ENCODE measurements at regions of chr1 and their contacts with region 1.

Region 1: GRCh38 chr1:245599371-245600174 is 444.8 kb downstream of the KIF26B start:
- DNase-seq: no peak
- ATAC-seq: no peak
- H3K4me3 ChIP-seq: no peak overlapping the region
- H3K27ac ChIP-seq: no peak overlapping the region
- H3K4me1 ChIP-seq: no peaks in the 10 kb centered on the region
- H3K27me3 ChIP-seq: no peaks in the 10 kb centered on the region; the same call in 1 of the 2 replicates
- CTCF ChIP-seq: no peak

Region 2: DNA sequence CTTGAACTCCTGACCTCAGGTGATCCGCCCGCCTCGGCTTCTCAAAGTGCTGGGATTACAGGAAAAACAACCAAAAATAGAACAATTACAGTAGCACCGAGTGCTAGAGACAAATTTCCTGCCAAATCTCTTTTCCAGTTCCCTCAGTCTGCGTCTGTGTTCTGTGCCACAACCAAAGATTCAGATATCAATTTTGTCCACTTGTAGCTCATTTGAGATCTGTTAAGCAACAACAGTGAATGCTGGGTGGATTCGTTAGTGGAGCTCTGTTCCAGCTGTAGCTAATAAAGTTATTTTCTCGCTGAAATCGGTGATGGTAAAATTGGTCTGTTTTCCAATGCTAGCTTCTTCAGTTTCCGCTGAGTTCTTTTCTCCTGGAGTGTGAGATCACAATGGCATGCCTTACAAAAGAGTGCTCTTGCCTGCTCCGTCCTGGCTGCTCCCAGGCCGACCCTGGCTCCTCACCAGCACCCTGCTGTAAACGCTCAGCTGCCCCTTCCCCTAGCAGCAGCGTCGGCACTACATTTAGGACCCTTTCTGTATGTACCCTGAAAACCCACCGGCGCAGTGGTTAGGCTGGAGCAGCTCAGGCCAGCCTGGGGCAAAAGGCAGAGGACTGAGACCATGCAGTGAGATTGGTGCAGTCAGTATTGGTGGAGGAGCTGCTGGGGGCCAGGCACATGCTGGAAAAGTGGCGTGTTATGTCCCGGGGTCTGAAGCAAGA is 49.4 kb before region 1 on chr1:
- CTCF ChIA-PET with region 1: no interaction called
- POLR2A ChIA-PET with region 1: no interaction called
- in situ Hi-C with region 1: no loop called
- intact Hi-C with region 1: loop called (anchors 10 kb)
- DNase-seq: no peak
- ATAC-seq: no peak
- H3K4me3 ChIP-seq: no peak overlapping the region
- H3K27ac ChIP-seq: no peak overlapping the region
- H3K4me1 ChIP-seq: no peaks in the 10 kb centered on the region
- H3K27me3 ChIP-seq: peaks cover 12% of the 10 kb centered on the region
- CTCF ChIP-seq: no peak

Measured in Panc1 (cell line).